Activated B cell treated with CpG ODN at 0.5 μM for 24 hours (primary cell): ENCODE measurements at regions of chr4 and their contacts with region 1.

Region 1: DNA sequence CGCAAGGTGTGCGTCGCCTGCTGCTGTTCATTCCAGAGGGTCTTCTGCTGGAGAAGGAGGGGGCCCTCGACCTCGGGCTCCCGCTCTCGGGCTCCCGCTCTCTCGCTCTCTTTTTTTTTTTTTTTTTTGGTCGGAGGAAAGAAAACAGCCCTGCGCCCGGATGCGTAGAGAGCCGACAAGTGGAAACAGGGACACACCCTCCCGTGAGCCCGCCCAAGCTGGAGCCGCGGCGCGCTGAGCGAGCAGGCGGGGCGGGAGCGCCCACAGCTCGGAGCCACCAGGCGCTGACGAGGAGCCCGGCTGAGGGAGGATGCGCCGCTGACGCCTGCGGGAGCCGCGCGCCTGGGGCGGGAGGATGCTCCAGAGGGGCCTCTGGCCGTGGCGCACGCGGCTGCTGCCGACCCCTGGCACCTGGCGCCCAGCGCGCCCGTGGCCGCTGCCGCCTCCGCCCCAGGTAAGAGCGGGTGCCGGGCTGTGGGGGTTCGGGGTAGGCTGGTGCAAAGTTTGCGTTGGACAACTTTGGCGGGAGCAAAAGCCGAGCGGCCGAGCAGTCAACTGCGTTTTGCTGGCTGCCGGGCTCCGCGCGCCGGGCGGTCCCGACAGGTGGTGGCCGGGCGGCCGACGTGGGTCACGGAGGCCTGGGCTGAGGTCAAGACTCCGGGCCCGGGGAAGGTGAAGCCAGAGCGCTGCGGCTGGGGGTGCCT is at the start of gene MCUB:
- DNase-seq: peak; percentile 75
- ATAC-seq: peak; percentile 84
- H3K4me3 Mint-ChIP-seq: peak within 1 kb of the TSS; percentile 93
- H3K27ac Mint-ChIP-seq: peak within 1 kb of the TSS; percentile 97
- H3K4me1 Mint-ChIP-seq: peaks cover 49% of the 10 kb centered on the region
- H3K27me3 Mint-ChIP-seq: no peaks in the 10 kb centered on the region
- CTCF ChIP-seq: no peak
- total RNA-seq, gene MCUB: 28.9 and 34.4 TPM in 2 replicates

Region 2: GRCh38 chr4:109648266-109648996 is 88.3 kb after region 1 on chr4:
- CTCF ChIA-PET with region 1: no interaction called
- POLR2A ChIA-PET with region 1: interaction called, 8 read pairs
- intact Hi-C with region 1: loop called (anchors 1 kb)
- DNase-seq: no peak
- ATAC-seq: peak; percentile 48
- H3K4me3 Mint-ChIP-seq: peak overlapping the region; percentile 39
- H3K27ac Mint-ChIP-seq: peak overlapping the region; percentile 74
- H3K4me1 Mint-ChIP-seq: peaks cover 35% of the 10 kb centered on the region
- H3K27me3 Mint-ChIP-seq: no peaks in the 10 kb centered on the region
- CTCF ChIP-seq: no peak

Region 3: GRCh38 chr4:109729718-109730618 is 169.8 kb after region 1 on chr4 and contains the start of gene PLA2G12A:
- CTCF ChIA-PET with region 1: no interaction called
- POLR2A ChIA-PET with region 1: interaction called, 10 read pairs
- intact Hi-C with region 1: loop called (anchors 1 kb)
- DNase-seq: peak; percentile 77
- ATAC-seq: peak; percentile 90
- H3K4me3 Mint-ChIP-seq: peak within 1 kb of the TSS; percentile 90
- H3K27ac Mint-ChIP-seq: peak within 1 kb of the TSS; percentile 79
- H3K4me1 Mint-ChIP-seq: peaks cover 12% of the 10 kb centered on the region
- H3K27me3 Mint-ChIP-seq: no peaks in the 10 kb centered on the region
- CTCF ChIP-seq: no peak
- total RNA-seq, gene PLA2G12A: 6.7 and 9.6 TPM in 2 replicates

Region 4: DNA sequence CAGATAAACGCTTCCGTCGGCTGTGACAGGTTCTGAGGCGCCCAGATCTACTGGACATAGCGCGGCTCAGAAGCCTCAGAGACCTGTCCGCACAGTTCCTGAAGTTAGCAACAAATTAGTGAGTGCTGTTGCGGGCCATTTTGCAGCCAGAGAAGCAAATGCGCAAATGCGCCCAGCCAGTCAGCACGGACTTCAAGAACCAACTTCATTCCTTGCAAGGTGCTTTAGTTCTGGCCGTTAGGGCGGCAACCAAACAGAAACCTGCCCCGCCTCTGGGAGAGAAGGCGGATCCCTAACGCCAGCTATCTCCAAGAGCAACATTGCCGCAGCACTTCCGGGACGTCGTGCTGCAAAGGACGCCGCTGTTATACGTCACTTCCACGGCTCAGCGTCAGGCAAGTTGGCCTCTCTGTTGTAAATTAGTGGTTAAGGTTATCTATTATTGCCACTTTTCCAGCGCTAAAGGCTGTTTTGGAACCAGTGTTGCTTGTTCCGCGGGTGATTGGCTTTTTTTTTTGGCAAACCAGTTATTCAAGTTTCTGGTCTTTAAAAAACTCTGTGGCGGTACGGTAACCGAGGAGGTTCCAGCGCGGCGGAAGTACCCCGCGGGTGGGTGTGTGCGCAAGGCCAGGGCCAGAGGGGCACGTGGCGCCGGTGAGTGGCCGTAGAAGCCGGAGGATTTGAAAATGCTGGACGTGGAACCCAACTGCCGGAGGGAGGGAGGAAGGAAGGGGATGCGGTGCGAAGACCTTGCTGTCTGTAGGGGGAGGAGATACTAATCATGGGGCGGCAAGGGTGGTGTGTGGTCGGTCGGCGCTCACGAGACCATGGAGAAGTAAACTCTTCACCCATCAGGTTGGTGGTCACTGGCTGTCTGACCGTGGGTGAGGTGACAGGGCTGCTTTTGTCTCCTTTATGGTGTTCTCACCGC is 255.3 kb after region 1 on chr4 and contains the start of gene GAR1:
- CTCF ChIA-PET with region 1: no interaction called
- POLR2A ChIA-PET with region 1: no interaction called
- intact Hi-C with region 1: loop called (anchors 1 kb)
- DNase-seq: peak; percentile 70
- ATAC-seq: peak; percentile 97
- H3K4me3 Mint-ChIP-seq: peak within 1 kb of the TSS; percentile 94
- H3K27ac Mint-ChIP-seq: peak within 1 kb of the TSS; percentile 93
- H3K4me1 Mint-ChIP-seq: peaks cover 28% of the 10 kb centered on the region
- H3K27me3 Mint-ChIP-seq: no peaks in the 10 kb centered on the region
- CTCF ChIP-seq: no peak
- total RNA-seq, gene GAR1: 21.0 and 23.1 TPM in 2 replicates